Psoas muscle (tissue), 8 donors: ENCODE measurements at regions of chr5 and their contacts with region 1.

Region 1: DNA sequence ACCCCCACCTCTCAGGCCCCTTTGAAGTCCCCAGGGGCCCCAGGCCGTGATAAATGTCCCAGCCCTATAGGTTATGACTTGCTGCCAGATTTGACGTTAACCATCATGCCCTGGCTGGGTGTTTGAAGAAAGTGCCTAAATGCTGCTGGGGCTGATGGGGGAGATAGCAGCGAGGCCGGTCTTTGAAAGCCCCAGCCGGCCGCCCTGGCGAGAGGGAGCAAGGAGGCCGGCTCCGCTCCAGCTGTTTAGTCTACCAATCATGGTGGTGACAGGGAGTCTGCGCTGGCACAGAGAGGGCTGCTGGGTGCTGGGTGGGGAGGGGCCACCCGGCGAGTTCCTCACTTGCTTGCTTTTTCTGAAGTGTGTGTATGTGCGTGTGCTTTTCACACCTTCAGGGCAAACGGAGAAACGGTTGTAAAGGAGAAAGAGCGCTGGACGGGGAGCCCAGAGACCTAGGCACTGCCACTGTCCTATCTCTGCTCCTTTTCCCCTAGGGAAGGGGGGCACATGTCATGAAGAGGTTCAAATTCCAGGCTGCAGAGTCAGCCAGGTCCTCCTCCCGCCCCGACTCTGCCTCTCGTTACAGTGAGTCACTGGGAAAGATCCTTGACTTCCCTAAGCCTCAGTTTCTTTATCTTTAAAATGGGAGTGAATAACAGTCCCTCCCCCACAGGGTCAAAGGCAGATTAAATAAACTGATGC is 126.1 kb upstream of the HAND1 start:
- DNase-seq: no peak
- ATAC-seq: peak in 3 of 4 donors; percentile 58 to 65 (median 58)
- H3K4me3 ChIP-seq: no peak overlapping the region
- H3K27ac ChIP-seq: no peak overlapping the region
- H3K4me1 ChIP-seq: no peaks in the 10 kb centered on the region
- H3K27me3 ChIP-seq: peaks cover 3 to 7% (median 6%) of the 10 kb centered on the region in 3 donors
- CTCF ChIP-seq: no peak

Region 2: GRCh38 chr5:154513669-154514084 is 90.5 kb before region 1 on chr5:
- intact Hi-C with region 1: loop called in 1 of 2 experiments (anchors 10 kb)
- DNase-seq: no peak
- ATAC-seq: no peak
- H3K4me3 ChIP-seq: no peak overlapping the region
- H3K27ac ChIP-seq: no peak overlapping the region
- H3K4me1 ChIP-seq: no peaks in the 10 kb centered on the region
- H3K27me3 ChIP-seq: peaks cover 0 to 4% (median 4%) of the 10 kb centered on the region in 3 donors
- CTCF ChIP-seq: no peak